Head of caudate nucleus (tissue), 42 donors: ENCODE measurements at regions of chr13 and their contacts with region 1.

Region 1: DNA sequence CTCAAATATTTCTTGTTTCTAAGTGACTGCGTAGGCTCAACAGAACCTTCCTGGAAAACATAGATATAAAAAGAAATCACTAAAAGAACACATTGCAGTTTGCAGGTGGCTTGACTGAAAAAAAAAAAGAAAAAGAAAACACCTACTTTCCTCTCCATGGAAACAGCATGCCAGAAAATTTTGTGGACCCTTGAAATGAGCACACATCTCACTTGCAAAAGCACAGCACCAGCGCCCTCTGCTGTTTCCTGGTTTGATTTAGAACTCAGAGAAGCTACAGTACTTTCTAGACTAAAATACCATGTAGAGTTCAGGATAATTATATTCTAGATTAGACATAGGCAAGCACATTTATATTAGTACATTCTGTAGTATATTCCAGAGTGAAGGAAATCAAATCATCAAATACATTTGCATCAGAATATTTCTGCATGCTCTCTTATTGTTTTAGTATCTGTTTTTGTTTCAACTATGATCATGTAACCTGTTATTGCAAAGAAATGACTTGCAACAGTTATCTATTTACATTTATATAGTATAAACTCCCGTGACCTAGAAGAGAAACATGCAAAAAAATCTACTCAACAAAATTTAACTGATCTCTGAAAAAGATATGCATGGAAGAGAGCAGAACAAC is 22.3 kb upstream of the XPO4 start:
- DNase-seq: peak; percentile 63 to 94 (median 84)

Region 2: GRCh38 chr13:20340759-20341171 is 584.1 kb before region 1 on chr13:
- intact Hi-C with region 1: no loop called
- DNase-seq: peak in 30 of 42 donors; percentile 23 to 88 (median 54)

Region 3: DNA sequence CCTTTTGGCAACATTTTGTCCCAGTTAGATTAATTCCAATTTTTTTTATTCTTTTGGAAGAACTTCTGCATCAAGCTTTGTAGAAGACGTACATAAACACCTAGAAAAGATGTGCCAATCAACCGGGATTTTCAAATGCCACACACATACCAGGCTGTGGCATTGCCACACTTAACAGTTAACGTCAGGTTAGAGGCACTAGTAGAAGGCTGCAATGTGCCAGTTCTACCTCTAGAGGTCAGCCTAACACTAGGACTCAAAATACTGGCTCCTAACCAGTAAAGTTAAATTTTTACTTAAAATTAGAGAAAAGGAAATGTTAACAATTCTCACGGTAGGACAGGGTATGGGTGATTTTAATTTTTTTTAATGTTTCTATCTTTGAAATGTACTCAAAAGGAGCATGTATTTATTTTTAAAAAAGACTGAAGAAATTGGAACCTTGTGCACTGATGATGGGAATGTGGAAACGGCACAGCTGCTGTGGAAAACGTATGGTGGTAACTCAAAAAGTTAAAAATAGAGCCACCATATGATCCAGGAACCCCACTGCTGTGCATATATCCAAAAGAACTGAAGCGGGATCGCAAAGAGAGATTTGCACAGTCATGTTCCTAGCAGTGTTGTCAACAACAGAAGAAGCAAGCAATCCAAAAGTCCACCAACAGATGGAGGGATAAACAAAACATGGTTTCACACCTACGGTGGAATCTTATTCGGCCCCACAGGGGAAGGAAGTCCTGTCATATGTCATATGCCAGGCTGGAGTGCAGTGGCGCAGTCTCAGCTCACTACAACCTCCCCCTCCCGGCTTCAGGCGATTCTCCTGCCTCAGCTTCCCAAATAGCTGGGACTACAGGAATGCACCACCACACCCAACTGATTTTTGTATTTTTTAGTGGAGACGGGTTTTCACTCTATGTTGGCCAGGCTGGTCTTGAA is 429.5 kb before region 1 on chr13:
- intact Hi-C with region 1: loop called (anchors 10 kb)
- DNase-seq: peak in 39 of 42 donors; percentile 29 to 91 (median 74)

Region 4: DNA sequence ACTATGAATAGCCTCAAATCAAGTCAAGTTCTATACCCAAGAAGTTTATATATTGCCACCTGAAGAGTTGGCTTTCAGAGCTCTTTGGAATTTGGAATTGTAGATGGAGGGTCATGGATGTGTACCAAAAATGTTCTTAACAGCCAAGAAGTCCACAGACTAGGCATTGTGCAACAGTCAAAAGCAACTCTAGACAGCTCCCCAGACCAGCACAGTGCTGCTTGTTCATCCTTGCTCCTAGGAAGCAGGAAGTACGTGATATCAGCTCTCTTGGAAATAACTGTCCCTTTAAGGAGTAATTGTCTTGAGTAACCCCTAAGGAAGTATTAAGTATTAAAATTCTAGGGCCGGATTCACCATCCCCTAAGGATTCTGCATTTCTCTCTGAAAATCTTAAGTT is 252.1 kb before region 1 on chr13:
- intact Hi-C with region 1: no loop called
- DNase-seq: no peak